ENCODE measurements at regions of chr18 and their contacts with region 1.

Region 1: GRCh38 chr18:49858309-49859020 is 45.1 kb upstream of the ACAA2 start:
- DNase-seq: peak; percentile 67
- ATAC-seq: no peak
- H3K4me3 Mint-ChIP-seq: no peak overlapping the region
- H3K27ac Mint-ChIP-seq: no peak overlapping the region
- H3K4me1 Mint-ChIP-seq: no peaks in the 10 kb centered on the region
- H3K27me3 Mint-ChIP-seq: no peaks in the 10 kb centered on the region

Region 2: GRCh38 chr18:49510393-49511115 is 347.9 kb before region 1 on chr18:
- CTCF ChIA-PET with region 1: interaction called, 64 read pairs
- DNase-seq: peak; percentile 63
- ATAC-seq: peak; percentile 63
- H3K4me3 Mint-ChIP-seq: no peak overlapping the region
- H3K27ac Mint-ChIP-seq: no peak overlapping the region
- H3K4me1 Mint-ChIP-seq: no peaks in the 10 kb centered on the region
- H3K27me3 Mint-ChIP-seq: peaks cover 23% of the 10 kb centered on the region

Region 3: DNA sequence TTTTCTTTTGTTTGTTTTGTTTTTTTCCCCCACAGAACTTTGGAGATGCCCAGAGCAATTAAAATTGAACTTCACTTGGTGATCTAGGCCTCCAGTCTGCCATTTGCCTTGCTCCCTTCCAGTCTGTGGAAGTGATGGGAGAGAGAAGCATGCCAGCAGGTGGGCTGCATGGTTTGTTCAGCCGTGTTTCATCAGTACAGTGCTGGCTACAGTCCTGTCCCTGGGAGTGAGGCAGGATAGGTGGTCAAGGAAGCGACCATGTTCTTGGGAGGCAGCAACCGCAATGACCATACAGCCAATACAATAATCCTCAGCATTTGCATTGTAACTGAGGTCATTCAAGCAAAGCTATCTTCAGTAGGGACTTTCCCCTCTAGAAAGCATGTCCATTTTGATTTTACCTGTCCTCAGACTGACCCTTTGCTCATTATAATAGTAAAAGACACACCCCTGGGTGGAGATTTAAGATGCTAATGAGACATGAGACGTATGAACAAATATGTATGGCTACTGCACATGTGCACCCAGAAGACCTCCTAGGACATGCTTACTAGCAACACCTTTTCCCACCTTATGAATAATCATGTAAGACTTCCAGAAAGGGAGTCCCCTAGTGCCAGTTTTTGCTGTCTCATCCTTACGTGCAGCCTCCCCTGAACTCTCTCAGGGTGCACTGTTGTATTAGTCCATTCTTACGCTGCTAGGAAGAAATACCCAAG is 307.7 kb before region 1 on chr18:
- CTCF ChIA-PET with region 1: interaction called, 10 read pairs
- DNase-seq: no peak
- ATAC-seq: no peak
- H3K4me3 Mint-ChIP-seq: no peak overlapping the region
- H3K27ac Mint-ChIP-seq: no peak overlapping the region
- H3K4me1 Mint-ChIP-seq: no peaks in the 10 kb centered on the region
- H3K27me3 Mint-ChIP-seq: peaks cover 57% of the 10 kb centered on the region

Region 4: GRCh38 chr18:49561289-49562193 is 296.9 kb before region 1 on chr18 and contains the start of gene LIPG:
- CTCF ChIA-PET with region 1: interaction called, 13 read pairs
- DNase-seq: peak; percentile 63
- ATAC-seq: peak; percentile 77
- H3K4me3 Mint-ChIP-seq: peak within 1 kb of the TSS; percentile 34
- H3K27ac Mint-ChIP-seq: no peak within 1 kb of the TSS
- H3K4me1 Mint-ChIP-seq: peaks cover 26% of the 10 kb centered on the region
- H3K27me3 Mint-ChIP-seq: peaks cover 85% of the 10 kb centered on the region
- total RNA-seq, gene LIPG: 0.16 TPM in 1 of 2 experiments, not detected in the other